ENCODE measurements at regions of chr9 and their contacts with region 1.

Region 1: GRCh38 chr9:126599047-126599650 is 14.6 kb upstream of the LMX1B start:
- DNase-seq: no peak
- ATAC-seq: peak in 1 of 2 experiments; percentile 60; a peak in 2 of 6 replicates
- H3K4me3 ChIP-seq: no peak overlapping the region
- H3K27ac ChIP-seq: no peak overlapping the region
- H3K4me1 ChIP-seq: no peaks in the 10 kb centered on the region
- CTCF ChIP-seq: peak; percentile 16; the same call in 1 of the 3 replicates
- EP300 ChIP-seq: no peak
- POLR2A ChIP-seq: no peak
- RAD21 ChIP-seq: no peak

Region 2: GRCh38 chr9:126564711-126565110 is 34.4 kb before region 1 on chr9:
- CTCF ChIA-PET with region 1: no interaction called
- POLR2A ChIA-PET with region 1: no interaction called
- DNase-seq: no peak
- ATAC-seq: peak in 1 of 2 experiments; percentile 64; a peak in 3 of 6 replicates
- H3K4me3 ChIP-seq: no peak overlapping the region
- H3K27ac ChIP-seq: no peak overlapping the region
- H3K4me1 ChIP-seq: no peaks in the 10 kb centered on the region
- CTCF ChIP-seq: 0 out of 3 replicates have a peak, but pooled peaks have one; percentile 10
- EP300 ChIP-seq: no peak
- POLR2A ChIP-seq: no peak
- RAD21 ChIP-seq: no peak

Region 3: DNA sequence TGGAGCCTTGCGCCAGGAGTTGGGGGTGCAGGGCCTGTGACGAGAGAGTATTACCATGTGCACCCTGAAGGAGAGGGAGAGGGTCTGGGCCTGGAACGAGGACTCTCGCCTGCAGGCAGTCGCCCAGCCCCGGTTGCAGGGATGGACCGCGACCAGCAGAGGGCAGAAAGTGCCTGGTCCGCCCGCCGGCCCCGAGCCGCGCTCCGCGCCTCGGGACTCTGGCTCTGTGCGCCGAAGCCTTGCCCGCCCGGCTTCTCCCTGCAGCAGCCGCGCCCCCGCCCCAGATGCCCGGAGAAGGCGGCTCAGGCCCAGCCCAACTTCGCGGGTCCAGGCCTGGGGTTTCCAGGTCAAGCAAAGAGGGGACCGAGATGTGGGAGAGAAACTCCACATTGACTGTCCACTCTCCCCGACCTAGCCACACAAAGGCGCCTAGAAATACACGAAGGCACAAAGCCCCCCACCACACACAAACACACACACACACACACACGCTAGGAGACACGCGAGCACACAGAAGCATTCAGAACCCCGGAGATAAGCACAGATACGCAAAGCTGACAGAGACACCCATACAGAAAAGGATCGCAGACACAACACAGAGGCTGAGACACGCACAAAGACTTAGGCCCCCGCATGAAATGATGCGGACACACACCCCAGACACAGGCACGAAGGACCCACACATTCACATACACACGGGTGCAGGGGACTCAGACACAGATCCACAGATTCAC is 12.6 kb after region 1 on chr9:
- CTCF ChIA-PET with region 1: interaction called, 31 read pairs
- POLR2A ChIA-PET with region 1: no interaction called
- DNase-seq: peak; percentile 75 to 80
- ATAC-seq: peak; percentile 74 to 94
- H3K4me3 ChIP-seq: peak overlapping the region; percentile 79
- H3K27ac ChIP-seq: no peak overlapping the region; a peak in 1 of 6 replicates
- H3K4me1 ChIP-seq: peaks cover 17% of the 10 kb centered on the region
- CTCF ChIP-seq: peak; percentile 76
- EP300 ChIP-seq: no peak
- POLR2A ChIP-seq: no peak
- RAD21 ChIP-seq: peak; percentile 58 to 77